AG04450 (cell line): ENCODE measurements at regions of chr11 and their contacts with region 1.

Region 1: DNA sequence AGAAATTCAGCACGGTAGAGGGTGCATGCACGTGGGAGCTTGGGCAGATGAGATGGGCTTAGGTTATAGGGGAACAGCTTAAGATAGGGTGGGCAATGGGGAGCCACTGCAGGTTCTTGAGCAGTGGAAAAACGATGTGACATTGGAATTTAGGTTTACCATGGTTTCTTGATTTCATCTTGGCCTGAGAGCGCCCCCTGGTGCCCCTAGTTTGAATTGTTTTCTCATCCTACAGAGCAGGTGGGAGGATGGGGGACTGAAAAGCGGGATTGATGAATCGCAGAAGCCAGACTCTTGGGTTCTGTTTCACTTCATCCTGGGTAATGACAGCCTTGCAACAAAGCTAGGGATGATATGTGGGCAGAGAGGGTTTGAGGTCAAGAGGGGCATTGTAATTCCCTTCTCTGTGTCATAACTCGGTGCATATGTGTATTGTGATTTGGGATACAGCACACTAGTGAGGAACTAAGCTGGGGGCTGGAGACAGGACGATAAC is 6.7 kb upstream of the MCAM start:
- DNase-seq: no peak
- H3K4me3 ChIP-seq: no peak overlapping the region
- H3K27ac ChIP-seq: no peak overlapping the region
- H3K27me3 ChIP-seq: no peaks in the 10 kb centered on the region
- CTCF ChIP-seq: peak; percentile 81

Region 2: DNA sequence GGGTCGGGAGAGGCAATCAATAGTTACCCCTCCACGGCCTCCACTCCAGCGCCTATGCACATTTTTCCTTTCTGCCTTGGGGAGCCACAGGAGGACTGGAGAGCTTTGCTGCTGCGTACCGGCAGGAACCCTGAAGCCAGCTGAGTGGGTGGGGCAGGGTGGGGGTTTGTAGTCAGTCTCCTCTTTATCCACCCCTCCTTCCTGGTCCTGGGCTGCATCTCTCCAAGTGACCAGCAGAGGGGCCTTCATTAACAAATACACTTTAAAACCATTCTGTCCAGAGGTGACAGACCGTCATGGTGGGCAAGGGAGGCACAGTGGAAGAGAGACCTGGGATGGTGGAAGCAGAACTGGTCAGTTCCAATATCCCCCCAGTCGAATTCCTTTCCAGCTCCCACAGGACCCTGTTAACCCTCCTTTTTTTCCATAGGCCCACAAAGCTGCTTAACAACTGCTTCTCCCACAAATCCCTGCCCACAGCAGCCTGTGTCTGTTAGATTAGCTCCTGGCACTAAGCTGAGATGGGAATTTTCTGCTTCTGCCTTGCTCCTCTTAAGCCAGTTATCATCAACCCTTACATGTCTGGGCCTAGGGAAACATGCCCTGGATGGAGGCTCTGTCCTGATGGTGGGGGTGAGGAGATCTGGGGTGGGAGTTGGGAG is 178.6 kb before region 1 on chr11:
- CTCF ChIA-PET with region 1: interaction called, 16 read pairs
- POLR2A ChIA-PET with region 1: no interaction called
- DNase-seq: peak; percentile 32
- H3K4me3 ChIP-seq: no peak overlapping the region
- H3K27ac ChIP-seq: no peak overlapping the region
- H3K27me3 ChIP-seq: peaks cover 26% of the 10 kb centered on the region
- CTCF ChIP-seq: peak; percentile 72

Region 3: DNA sequence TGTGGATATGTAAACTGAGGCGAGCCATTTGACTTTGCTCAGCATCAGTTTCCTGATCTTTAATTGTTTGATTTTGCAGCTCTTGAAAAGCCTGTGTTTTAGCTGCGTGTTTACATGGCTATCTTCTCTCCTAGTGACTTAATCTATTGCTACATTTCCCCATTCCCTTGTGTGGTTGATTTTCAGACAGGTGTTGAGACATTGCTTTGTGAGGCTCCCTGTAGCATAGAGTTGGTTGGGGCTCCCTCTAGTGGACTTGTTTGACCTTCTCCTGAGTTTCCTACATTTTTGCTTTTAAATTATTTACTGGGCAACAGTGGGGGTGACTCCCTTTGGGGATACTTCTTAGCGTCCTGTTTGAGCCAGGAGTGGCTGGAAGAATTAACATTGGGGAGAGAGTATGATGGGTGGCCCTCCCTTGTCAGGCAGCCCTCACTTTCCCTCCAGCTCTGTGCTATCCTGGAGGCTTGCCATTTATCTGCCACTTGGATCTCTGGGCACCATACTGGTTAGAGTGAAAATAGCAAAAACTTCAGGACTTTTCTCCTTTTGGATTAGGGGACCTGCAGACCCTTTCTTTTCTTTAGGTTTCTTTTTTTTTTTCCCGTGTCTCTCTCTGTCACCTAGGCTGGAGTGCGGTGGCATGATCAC is 126.6 kb before region 1 on chr11:
- CTCF ChIA-PET with region 1: interaction called, 15 read pairs
- POLR2A ChIA-PET with region 1: no interaction called
- DNase-seq: peak; percentile 78
- H3K4me3 ChIP-seq: no peak overlapping the region
- H3K27ac ChIP-seq: no peak overlapping the region
- H3K27me3 ChIP-seq: no peaks in the 10 kb centered on the region
- CTCF ChIP-seq: peak; percentile 86

Region 4: GRCh38 chr11:119306373-119306890 is 17.2 kb before region 1 on chr11:
- CTCF ChIA-PET with region 1: interaction called, 57 read pairs
- POLR2A ChIA-PET with region 1: no interaction called
- DNase-seq: no peak
- H3K4me3 ChIP-seq: no peak overlapping the region
- H3K27ac ChIP-seq: peak overlapping the region; percentile 39
- H3K27me3 ChIP-seq: no peaks in the 10 kb centered on the region
- CTCF ChIP-seq: no peak